ENCODE measurements at regions of chr13 and their contacts with region 1.

Region 1: GRCh38 chr13:79480954-79481684 is at the start of gene NDFIP2:
- DNase-seq: peak; percentile 86 to 94
- H3K4me3 ChIP-seq: peak within 1 kb of the TSS; percentile 91
- H3K27ac ChIP-seq: peak within 1 kb of the TSS; percentile 81
- H3K4me1 ChIP-seq: peaks cover 44% of the 10 kb centered on the region
- H3K27me3 ChIP-seq: no peaks in the 10 kb centered on the region
- CTCF ChIP-seq: no peak
- total RNA-seq, gene NDFIP2: 47.9 and 48.4 TPM in 2 replicates

Region 2: DNA sequence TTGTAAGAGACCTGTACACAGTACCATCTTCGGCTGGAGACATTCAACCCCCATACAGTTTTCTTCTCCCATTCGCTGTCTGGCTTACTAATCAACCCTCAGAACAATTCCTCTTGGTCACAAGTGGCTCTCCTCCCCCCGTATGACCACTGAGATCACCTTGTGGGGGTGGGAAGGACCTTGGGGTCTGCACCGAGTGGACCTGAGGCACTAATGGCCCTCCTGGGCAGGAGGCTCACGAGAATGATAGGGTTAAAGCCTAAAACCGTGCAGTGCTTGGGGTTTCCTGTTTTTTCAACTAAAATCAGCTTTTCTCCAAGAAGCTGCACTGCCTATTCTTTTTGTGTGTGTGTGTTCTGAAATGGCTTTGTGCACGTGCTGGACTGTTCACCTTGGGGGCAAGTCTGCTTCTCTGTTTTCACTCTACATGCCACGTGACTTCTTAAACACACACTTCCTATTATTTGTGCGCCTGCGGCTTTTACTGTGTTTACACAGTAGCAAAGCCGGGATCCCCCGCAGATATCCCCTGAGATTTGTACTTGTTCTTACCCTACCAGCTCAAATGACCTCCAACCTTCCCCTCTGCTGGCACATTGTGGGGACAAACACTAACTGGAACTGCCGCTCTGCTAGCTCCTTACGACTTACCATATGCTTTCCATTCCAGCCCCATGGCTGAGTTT is 87.4 kb before region 1 on chr13:
- CTCF ChIA-PET with region 1: no interaction called
- POLR2A ChIA-PET with region 1: interaction called, 10 read pairs
- intact Hi-C with region 1: no loop called
- DNase-seq: no peak
- H3K4me3 ChIP-seq: no peak overlapping the region
- H3K27ac ChIP-seq: no peak overlapping the region
- H3K4me1 ChIP-seq: 0 out of 2 replicates have a peak, but pooled peaks cover 7% of the 10 kb centered on the region
- H3K27me3 ChIP-seq: no peaks in the 10 kb centered on the region
- CTCF ChIP-seq: no peak

Region 3: DNA sequence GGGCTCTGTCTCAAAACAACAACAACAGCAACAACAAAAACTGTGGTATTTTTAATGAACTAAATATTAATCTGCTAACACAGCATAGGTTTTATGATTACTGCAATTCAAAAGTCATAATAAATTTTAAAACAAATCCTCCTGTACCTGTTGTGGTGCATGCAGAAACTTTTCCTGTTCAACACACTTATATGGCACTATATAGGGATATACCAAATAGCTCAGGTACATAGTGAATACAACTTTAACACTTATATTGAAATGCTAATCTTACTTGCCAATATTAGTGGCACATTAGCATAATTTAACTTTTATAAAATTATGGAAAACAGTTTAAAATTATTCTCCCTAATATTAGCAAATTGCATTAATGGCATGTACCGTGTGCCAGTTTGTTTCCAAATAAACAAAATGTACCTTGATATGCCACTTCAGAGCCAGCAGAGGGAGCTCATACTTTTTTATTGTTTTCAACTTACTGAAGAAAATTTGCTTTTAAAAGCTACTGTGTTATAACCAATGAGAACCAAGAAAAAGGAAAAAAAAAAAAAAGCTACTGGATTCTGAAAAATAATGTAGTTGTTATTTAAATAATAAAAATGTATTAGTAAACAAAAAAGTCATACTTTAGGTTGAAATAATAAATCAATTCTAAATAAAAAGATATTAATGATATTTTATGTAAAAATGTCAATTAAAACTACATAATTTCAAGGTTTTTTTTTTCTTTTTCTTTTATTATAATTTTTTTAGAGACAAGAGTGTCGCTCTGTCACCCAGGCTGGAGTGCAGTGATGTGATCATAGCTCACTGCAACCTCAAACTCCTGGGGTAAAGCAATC is 57.1 kb before region 1 on chr13:
- CTCF ChIA-PET with region 1: interaction called, 7 read pairs
- POLR2A ChIA-PET with region 1: interaction called, 8 read pairs
- intact Hi-C with region 1: loop called (anchors 5 kb)
- DNase-seq: peak in 1 of 2 experiments; percentile 55
- H3K4me3 ChIP-seq: no peak overlapping the region
- H3K27ac ChIP-seq: no peak overlapping the region
- H3K4me1 ChIP-seq: no peaks in the 10 kb centered on the region
- H3K27me3 ChIP-seq: no peaks in the 10 kb centered on the region
- CTCF ChIP-seq: peak; percentile 87

Region 4: DNA sequence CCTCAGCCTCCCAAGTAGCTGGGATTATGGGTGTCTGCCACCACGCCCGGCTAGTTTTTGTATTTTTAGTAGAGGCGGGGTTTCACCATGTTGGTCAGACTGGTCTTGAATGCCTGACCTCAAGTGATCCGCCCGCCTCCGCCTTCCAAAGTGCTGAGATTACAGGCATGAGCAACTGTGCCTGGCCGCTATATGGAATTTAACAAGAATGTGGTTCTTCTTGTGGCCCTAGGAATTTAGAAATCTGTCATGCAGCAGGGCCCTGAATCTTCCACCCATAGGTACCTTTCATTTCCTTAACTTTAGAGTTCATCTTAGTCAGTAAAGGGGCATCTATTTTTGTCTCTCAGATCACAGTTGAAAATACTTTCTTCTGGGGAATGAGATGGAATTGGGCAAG is 25.8 kb before region 1 on chr13:
- CTCF ChIA-PET with region 1: interaction called, 13 read pairs
- POLR2A ChIA-PET with region 1: interaction called, 34 read pairs
- intact Hi-C with region 1: no loop called
- DNase-seq: peak; percentile 70 to 88
- H3K4me3 ChIP-seq: no peak overlapping the region
- H3K27ac ChIP-seq: peak overlapping the region; percentile 50
- H3K4me1 ChIP-seq: peaks cover 40% of the 10 kb centered on the region
- H3K27me3 ChIP-seq: no peaks in the 10 kb centered on the region
- CTCF ChIP-seq: no peak

Region 5: GRCh38 chr13:79621449-79621848 is 140.3 kb after region 1 on chr13:
- CTCF ChIA-PET with region 1: no interaction called
- POLR2A ChIA-PET with region 1: no interaction called
- intact Hi-C with region 1: loop called (anchors 2 kb)
- DNase-seq: peak; percentile 0 to 62
- H3K4me3 ChIP-seq: no peak overlapping the region
- H3K27ac ChIP-seq: peak overlapping the region; percentile 96
- H3K4me1 ChIP-seq: peaks cover 26% of the 10 kb centered on the region
- H3K27me3 ChIP-seq: no peaks in the 10 kb centered on the region
- CTCF ChIP-seq: no peak

Region 6: GRCh38 chr13:80655778-80656511 is 1174.8 kb after region 1 on chr13:
- CTCF ChIA-PET with region 1: no interaction called
- POLR2A ChIA-PET with region 1: interaction called, 13 read pairs
- intact Hi-C with region 1: no loop called
- DNase-seq: no peak
- H3K4me3 ChIP-seq: no peak overlapping the region
- H3K27ac ChIP-seq: no peak overlapping the region
- H3K4me1 ChIP-seq: no peaks in the 10 kb centered on the region
- H3K27me3 ChIP-seq: no peaks in the 10 kb centered on the region
- CTCF ChIP-seq: no peak

Measured in PC-9 (cell line).